Activated CD8-positive, alpha-beta T cell treated with anti-CD3 and anti-CD28 coated beads for 36 hours (primary cell): ENCODE measurements at regions of chr6 and their contacts with region 1.

Region 1: GRCh38 chr6:149431905-149432775 is 32.1 kb downstream of the SUMO4 start:
- DNase-seq: peak; percentile 96
- ATAC-seq: peak; percentile 97
- H3K4me3 Mint-ChIP-seq: peak overlapping the region; percentile 28
- H3K27ac Mint-ChIP-seq: peak overlapping the region; percentile 77
- H3K4me1 Mint-ChIP-seq: peaks cover 6% of the 10 kb centered on the region
- H3K27me3 Mint-ChIP-seq: no peaks in the 10 kb centered on the region
- CTCF ChIP-seq: peak; percentile 95

Region 2: DNA sequence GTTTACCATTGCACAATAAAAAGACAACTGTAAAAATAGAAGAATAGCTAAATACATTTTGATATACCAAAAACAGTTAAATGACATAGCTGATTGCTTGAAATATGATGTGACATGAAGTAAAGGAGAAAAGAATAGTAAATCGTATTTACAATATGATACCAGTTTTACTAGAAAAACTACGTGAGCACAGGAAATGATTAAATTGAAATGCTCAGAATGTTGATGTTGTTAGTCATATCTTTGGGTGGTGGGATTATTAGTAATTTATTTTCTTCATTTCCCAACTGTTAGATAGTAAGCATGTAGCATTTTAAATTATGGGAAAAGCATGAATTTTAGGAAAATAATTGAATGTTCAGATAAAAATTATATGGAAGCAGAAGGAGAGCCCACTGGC is 382.9 kb before region 1 on chr6:
- CTCF ChIA-PET with region 1: interaction called, 16 read pairs
- POLR2A ChIA-PET with region 1: no interaction called
- intact Hi-C with region 1: no loop called
- DNase-seq: no peak
- ATAC-seq: no peak
- H3K4me3 Mint-ChIP-seq: no peak overlapping the region
- H3K27ac Mint-ChIP-seq: no peak overlapping the region
- H3K4me1 Mint-ChIP-seq: peaks cover 37% of the 10 kb centered on the region
- H3K27me3 Mint-ChIP-seq: no peaks in the 10 kb centered on the region
- CTCF ChIP-seq: no peak

Region 3: GRCh38 chr6:149082286-149082707 is 349.8 kb before region 1 on chr6:
- CTCF ChIA-PET with region 1: interaction called, 71 read pairs
- POLR2A ChIA-PET with region 1: interaction called, 4 read pairs
- intact Hi-C with region 1: loop called (anchors 1 kb)
- DNase-seq: peak; percentile 97
- ATAC-seq: peak; percentile 86
- H3K4me3 Mint-ChIP-seq: no peak overlapping the region
- H3K27ac Mint-ChIP-seq: no peak overlapping the region
- H3K4me1 Mint-ChIP-seq: peaks cover 50% of the 10 kb centered on the region
- H3K27me3 Mint-ChIP-seq: no peaks in the 10 kb centered on the region
- CTCF ChIP-seq: peak; percentile 81

Region 4: GRCh38 chr6:149324428-149324827 is 107.7 kb before region 1 on chr6:
- CTCF ChIA-PET with region 1: interaction called, 17 read pairs
- POLR2A ChIA-PET with region 1: interaction called, 3 read pairs
- intact Hi-C with region 1: no loop called
- DNase-seq: peak; percentile 21
- ATAC-seq: peak; percentile 38
- H3K4me3 Mint-ChIP-seq: peak overlapping the region; percentile 36
- H3K27ac Mint-ChIP-seq: peak overlapping the region; percentile 82
- H3K4me1 Mint-ChIP-seq: peaks cover 70% of the 10 kb centered on the region
- H3K27me3 Mint-ChIP-seq: no peaks in the 10 kb centered on the region
- CTCF ChIP-seq: no peak

Region 5: DNA sequence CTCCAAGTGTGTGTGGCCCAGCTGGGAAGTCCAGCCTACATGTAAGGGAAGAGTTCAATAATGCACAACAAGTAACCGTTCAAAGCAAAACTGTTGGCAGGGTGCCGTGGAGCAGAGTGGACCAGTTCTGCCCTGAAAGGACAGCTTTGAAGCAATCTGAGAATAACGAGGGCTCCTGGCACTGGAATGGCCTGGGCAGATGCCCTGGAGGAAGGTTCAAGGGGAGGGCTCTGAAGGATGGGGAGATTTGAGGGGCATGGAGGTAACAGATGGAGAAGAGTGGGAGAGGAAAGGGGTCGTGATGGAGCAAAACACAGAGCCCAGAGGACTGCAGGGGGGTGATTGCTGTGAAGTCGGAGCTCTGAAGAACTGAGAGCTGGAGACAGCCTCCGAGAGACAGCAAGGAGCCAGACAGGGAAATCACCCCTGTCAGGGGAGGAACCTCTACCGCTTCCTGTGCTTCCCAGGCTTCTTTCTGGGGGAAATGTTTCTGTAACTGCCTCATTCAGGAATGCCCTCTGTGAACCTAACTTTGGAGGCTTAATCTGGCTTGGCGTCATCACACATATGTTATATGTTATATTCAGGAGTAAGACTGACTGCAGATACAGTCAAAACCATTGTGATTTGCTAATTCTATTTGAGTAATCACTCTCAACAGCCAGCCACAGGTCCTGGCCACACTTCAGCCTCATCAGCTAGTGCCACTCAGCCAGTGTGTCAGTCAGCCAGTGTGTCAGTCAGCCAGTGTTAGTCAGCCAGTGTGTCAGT is 11.5 kb after region 1 on chr6:
- CTCF ChIA-PET with region 1: interaction called, 28 read pairs
- POLR2A ChIA-PET with region 1: interaction called, 3 read pairs
- intact Hi-C with region 1: no loop called
- DNase-seq: no peak
- ATAC-seq: peak; percentile 24
- H3K4me3 Mint-ChIP-seq: no peak overlapping the region
- H3K27ac Mint-ChIP-seq: no peak overlapping the region
- H3K4me1 Mint-ChIP-seq: peaks cover 9% of the 10 kb centered on the region
- H3K27me3 Mint-ChIP-seq: no peaks in the 10 kb centered on the region
- CTCF ChIP-seq: no peak

Region 6: GRCh38 chr6:149941583-149942431 is 509.7 kb after region 1 on chr6 and contains the start of gene ULBP2:
- CTCF ChIA-PET with region 1: no interaction called
- POLR2A ChIA-PET with region 1: no interaction called
- intact Hi-C with region 1: no loop called
- DNase-seq: peak; percentile 96
- ATAC-seq: peak; percentile 94
- H3K4me3 Mint-ChIP-seq: peak within 1 kb of the TSS; percentile 77
- H3K27ac Mint-ChIP-seq: peak within 1 kb of the TSS; percentile 68
- H3K4me1 Mint-ChIP-seq: peaks cover 25% of the 10 kb centered on the region
- H3K27me3 Mint-ChIP-seq: peaks cover 38% of the 10 kb centered on the region
- CTCF ChIP-seq: no peak
- total RNA-seq, gene ULBP2: 0.38 to 0.67 TPM